Gastrocnemius medialis (tissue), 4 donors: ENCODE measurements at regions of chr11 and their contacts with region 1.

Region 1: GRCh38 chr11:36492724-36493304 is 17.3 kb downstream of the TRAF6 start:
- DNase-seq: no peak
- ATAC-seq: peak in 1 of 2 donors; percentile 58
- H3K4me3 ChIP-seq: no peak overlapping the region
- H3K27ac ChIP-seq: no peak overlapping the region
- H3K4me1 ChIP-seq: peaks cover 2 to 8% of the 10 kb centered on the region in 2 donors
- H3K27me3 ChIP-seq: no peaks in the 10 kb centered on the region
- CTCF ChIP-seq: peak; percentile 37 to 79 (median 58)
- POLR2A ChIP-seq: no peak

Region 2: GRCh38 chr11:35800970-35801953 is 691.6 kb before region 1 on chr11:
- in situ Hi-C with region 1: loop called in 1 of 4 experiments (anchors 25 kb)
- intact Hi-C with region 1: no loop called
- DNase-seq: no peak
- ATAC-seq: no peak
- H3K4me3 ChIP-seq: no peak overlapping the region
- H3K27ac ChIP-seq: no peak overlapping the region
- H3K4me1 ChIP-seq: peaks cover 19 to 32% of the 10 kb centered on the region in 2 donors
- H3K27me3 ChIP-seq: no peaks in the 10 kb centered on the region
- CTCF ChIP-seq: no peak
- POLR2A ChIP-seq: no peak

Region 3: DNA sequence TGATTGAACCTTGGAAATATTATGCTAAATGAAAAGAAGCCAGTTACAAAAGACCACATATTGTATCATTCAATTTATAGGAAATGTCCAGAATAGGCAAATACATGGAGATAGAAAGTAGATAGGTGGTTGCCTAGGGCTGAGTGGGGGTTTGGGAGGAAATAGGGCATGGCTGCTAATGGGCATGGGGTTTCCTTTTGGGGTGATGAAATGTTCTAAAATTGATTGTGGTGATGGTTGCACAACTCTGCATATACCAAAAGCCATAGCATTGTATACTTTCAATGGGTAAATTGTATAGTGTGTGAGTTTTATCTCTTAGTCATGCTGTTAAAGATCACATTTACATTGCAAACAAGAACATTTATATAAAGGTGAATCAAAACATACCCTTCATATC is 500.3 kb before region 1 on chr11:
- in situ Hi-C with region 1: no loop called
- intact Hi-C with region 1: no loop called
- DNase-seq: no peak
- ATAC-seq: no peak
- H3K4me3 ChIP-seq: no peak overlapping the region
- H3K27ac ChIP-seq: no peak overlapping the region
- H3K4me1 ChIP-seq: no peaks in the 10 kb centered on the region
- H3K27me3 ChIP-seq: no peaks in the 10 kb centered on the region
- CTCF ChIP-seq: no peak
- POLR2A ChIP-seq: no peak

Region 4: GRCh38 chr11:36289226-36289852 is 203.5 kb before region 1 on chr11 and contains the start of gene COMMD9:
- in situ Hi-C with region 1: loop called in 2 of 4 experiments (anchors 25 kb)
- intact Hi-C with region 1: loop called (anchors 2 kb)
- DNase-seq: peak; percentile 92
- ATAC-seq: peak; percentile 96 to 99
- H3K4me3 ChIP-seq: peak within 1 kb of the TSS; percentile 70 to 86 (median 79)
- H3K27ac ChIP-seq: peak within 1 kb of the TSS; percentile 63 to 80 (median 68)
- H3K4me1 ChIP-seq: peaks cover 13 to 15% of the 10 kb centered on the region in 2 donors
- H3K27me3 ChIP-seq: no peaks in the 10 kb centered on the region
- CTCF ChIP-seq: no peak
- POLR2A ChIP-seq: peak in 1 of 2 donors; percentile 28
- total RNA-seq, gene COMMD9: 51.8 to 68.6 (median 57.7) TPM

Region 5: GRCh38 chr11:36296895-36297604 is 195.8 kb before region 1 on chr11:
- in situ Hi-C with region 1: loop called in 3 of 4 experiments (anchors 5 to 25 kb)
- intact Hi-C with region 1: no loop called
- DNase-seq: no peak
- ATAC-seq: no peak
- H3K4me3 ChIP-seq: no peak overlapping the region
- H3K27ac ChIP-seq: no peak overlapping the region
- H3K4me1 ChIP-seq: peaks cover 0 to 3% of the 10 kb centered on the region in 2 donors
- H3K27me3 ChIP-seq: no peaks in the 10 kb centered on the region
- CTCF ChIP-seq: no peak
- POLR2A ChIP-seq: no peak

Region 6: DNA sequence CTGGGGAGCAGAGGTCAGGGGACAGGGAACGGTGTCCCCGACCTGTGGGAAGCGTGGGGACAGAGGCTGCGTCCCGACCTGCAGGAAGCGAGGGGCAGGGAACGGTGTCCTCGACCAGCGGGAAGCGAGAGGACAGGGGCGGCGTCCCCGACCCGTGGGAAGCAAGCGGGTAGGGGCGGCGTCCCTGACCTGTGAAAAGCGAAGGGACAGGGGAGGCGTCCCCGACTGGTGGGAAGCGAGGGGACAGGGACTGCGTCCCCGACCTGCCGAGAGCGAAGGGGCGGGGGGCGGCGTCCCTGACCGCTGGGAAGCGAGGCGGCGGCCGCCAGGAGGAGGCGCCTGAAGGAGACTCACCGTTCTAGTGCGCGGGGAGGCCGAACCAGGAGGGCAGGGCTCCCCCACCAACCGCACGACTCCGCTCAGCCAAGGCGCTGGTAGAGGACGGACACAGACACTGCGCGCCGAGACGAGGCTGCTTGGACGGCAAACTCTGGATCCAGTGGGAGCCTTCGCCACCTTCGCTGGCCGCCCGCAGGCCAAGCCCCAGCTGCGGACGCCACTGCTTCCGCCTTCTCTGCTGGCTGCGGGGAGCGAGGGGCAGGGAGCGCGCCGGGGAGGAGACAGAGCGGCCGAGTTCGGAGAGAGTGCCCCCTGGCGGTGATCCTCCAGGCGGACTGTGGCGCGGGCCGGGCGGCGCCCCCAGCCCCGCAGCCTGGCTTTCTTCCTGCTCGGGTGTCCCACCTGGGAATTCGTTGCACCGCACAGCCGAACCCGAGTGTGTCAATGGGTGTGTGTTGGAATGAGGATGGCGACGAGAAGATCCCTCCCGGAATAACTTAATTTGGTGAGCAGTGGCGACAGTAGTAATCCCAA is 17.1 kb after region 1 on chr11 and contains the start of gene TRAF6:
- in situ Hi-C with region 1: no loop called
- intact Hi-C with region 1: no loop called
- DNase-seq: peak; percentile 73 to 76
- ATAC-seq: peak; percentile 91
- H3K4me3 ChIP-seq: peak within 1 kb of the TSS; percentile 73 to 97 (median 86)
- H3K27ac ChIP-seq: peak within 1 kb of the TSS; percentile 88 to 94 (median 92)
- H3K4me1 ChIP-seq: peaks cover 16 to 20% of the 10 kb centered on the region in 2 donors
- H3K27me3 ChIP-seq: no peaks in the 10 kb centered on the region
- CTCF ChIP-seq: peak; percentile 78 to 93 (median 91)
- POLR2A ChIP-seq: peak; percentile 88 to 89
- total RNA-seq, gene TRAF6: 9.8 to 14.4 (median 11.3) TPM